ENCODE measurements at regions of chr7 and their contacts with region 1.

Region 1: GRCh38 chr7:8149222-8149621 is 112.7 kb downstream of the ICA1 start:
- DNase-seq: peak in 2 of 14 experiments; percentile 32 to 69
- ATAC-seq: peak; percentile 69
- H3K4me3 ChIP-seq: peak overlapping the region; percentile 3
- H3K4me3 Mint-ChIP-seq: peak overlapping the region; percentile 43
- H3K27ac ChIP-seq: peak overlapping the region in 1 of 2 donors; percentile 19
- H3K27ac Mint-ChIP-seq: peak overlapping the region; percentile 90
- H3K4me1 ChIP-seq: peaks cover 38% of the 10 kb centered on the region
- H3K4me1 Mint-ChIP-seq: peaks cover 85% of the 10 kb centered on the region
- H3K27me3 ChIP-seq: no peaks in the 10 kb centered on the region
- H3K27me3 Mint-ChIP-seq: no peaks in the 10 kb centered on the region
- CTCF ChIP-seq: no peak

Region 2: GRCh38 chr7:8176370-8177081 is 27.3 kb after region 1 on chr7:
- CTCF ChIA-PET with region 1: no interaction called
- POLR2A ChIA-PET with region 1: interaction called, 11 read pairs
- intact Hi-C with region 1: no loop called
- DNase-seq: peak; percentile 47 to 87 (median 64)
- ATAC-seq: peak; percentile 93
- H3K4me3 ChIP-seq: peak overlapping the region; percentile 22
- H3K4me3 Mint-ChIP-seq: peak overlapping the region; percentile 72
- H3K27ac ChIP-seq: peak overlapping the region; percentile 82 to 88
- H3K27ac Mint-ChIP-seq: peak overlapping the region; percentile 96
- H3K4me1 ChIP-seq: peaks cover 42% of the 10 kb centered on the region
- H3K4me1 Mint-ChIP-seq: peaks cover 60% of the 10 kb centered on the region
- H3K27me3 ChIP-seq: no peaks in the 10 kb centered on the region
- H3K27me3 Mint-ChIP-seq: no peaks in the 10 kb centered on the region
- CTCF ChIP-seq: no peak

Measured in CD4-positive, alpha-beta T cell (primary cell).